T-cell (primary cell): ENCODE measurements at regions of chr15 and their contacts with region 1.

Region 1: DNA sequence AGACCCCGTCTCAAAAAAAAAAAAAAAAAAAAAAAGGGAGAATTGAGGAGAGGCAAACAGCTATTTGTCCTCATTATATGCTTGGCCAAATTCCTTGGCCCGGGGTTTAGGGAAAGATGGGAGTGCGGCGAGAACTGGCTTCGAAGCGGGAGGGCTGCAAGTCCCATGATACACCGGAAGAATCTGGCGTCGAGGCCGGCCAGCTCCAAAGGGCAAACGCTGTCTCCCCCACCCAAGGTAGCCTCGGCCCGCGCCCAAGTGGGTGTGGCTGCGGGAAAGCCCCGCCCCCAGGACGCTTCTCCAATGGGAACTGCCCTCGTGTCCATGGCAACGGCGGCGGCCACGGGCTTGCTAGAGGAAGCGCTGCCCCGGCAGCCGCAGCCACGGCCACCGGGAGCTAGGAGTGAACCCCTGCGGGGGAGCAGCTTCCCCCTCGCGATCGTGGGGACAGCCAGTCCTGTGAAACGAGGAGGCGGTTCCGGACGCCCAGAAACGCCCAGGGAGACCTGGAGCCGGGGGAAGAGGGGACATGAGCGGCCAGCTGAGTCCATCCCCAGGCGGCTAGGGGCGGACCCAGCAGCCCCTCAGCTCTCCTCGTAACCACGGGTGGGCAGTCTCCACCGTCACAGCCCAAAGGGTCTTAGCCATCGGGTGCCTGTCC is at the start of gene TTLL13:
- DNase-seq: peak in 30 of 35 experiments; percentile 9 to 71 (median 53)
- ATAC-seq: peak; percentile 65 to 86 (median 82)
- H3K4me3 ChIP-seq: peak within 1 kb of the TSS; percentile 56 to 62
- H3K4me3 Mint-ChIP-seq: peak within 1 kb of the TSS; percentile 68 to 82 (median 68)
- H3K27ac ChIP-seq: no peak within 1 kb of the TSS
- H3K27ac Mint-ChIP-seq: peak within 1 kb of the TSS; percentile 5 to 44
- H3K4me1 ChIP-seq: peaks cover 0 to 16% of the 10 kb centered on the region in 2 experiments
- H3K4me1 Mint-ChIP-seq: peaks cover 16 to 20% (median 19%) of the 10 kb centered on the region in 3 donors
- H3K27me3 ChIP-seq: peaks cover 0 to 2% of the 10 kb centered on the region in 2 experiments
- H3K27me3 Mint-ChIP-seq: no peaks in the 10 kb centered on the region
- total RNA-seq, gene TTLL13: 0.46 to 1.7 (median 0.70) TPM

Region 2: DNA sequence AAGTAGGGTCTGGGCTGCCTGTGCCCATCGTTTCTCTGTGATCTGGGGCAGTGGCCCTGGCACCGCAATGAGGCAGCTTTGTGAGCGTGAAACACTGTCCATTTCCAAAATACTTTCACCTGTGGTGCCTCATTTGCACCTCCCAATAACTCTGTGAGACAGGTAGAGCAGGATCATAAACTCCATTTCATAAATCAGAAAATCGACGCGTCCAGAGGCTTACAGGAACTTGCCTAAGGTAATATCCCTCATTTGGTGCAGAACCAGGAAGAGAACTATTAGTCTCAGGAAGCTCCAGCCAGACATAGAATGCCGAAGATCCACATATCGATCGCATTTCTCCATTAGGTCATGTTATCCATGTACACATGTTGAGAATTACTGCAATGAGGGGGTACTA is 86.4 kb before region 1 on chr15:
- CTCF ChIA-PET with region 1: no interaction called
- POLR2A ChIA-PET with region 1: interaction called in 1 of 2 experiments, 15 read pairs
- DNase-seq: no peak
- ATAC-seq: no peak
- H3K4me3 ChIP-seq: no peak overlapping the region
- H3K4me3 Mint-ChIP-seq: no peak overlapping the region
- H3K27ac ChIP-seq: no peak overlapping the region
- H3K27ac Mint-ChIP-seq: no peak overlapping the region
- H3K4me1 ChIP-seq: peaks cover under 1 to 4% of the 10 kb centered on the region in 2 experiments
- H3K4me1 Mint-ChIP-seq: peaks cover 5 to 13% (median 10%) of the 10 kb centered on the region in 3 donors
- H3K27me3 ChIP-seq: peaks cover 0 to 11% of the 10 kb centered on the region in 2 experiments
- H3K27me3 Mint-ChIP-seq: peaks cover 4 to 6% of the 10 kb centered on the region in 2 donors

Region 3: DNA sequence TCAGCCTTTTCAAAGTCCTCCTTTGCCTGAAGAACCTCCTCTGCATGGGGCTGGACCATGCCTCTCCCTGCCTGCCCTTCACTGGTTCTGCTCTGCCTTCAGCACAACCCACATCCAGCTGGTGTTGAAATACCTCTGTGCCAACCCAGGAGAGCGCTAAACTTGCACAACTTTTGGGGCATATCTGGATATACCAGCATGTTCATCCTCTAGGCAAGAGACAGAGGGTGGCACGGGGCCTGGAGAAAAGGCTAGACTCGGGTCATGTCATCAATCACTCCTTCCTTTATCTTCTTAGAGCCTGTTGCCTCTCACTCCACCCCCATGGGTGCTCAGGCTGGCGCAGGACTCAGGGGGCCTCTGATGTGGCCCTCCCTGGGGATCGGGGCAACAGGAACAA is 43.4 kb before region 1 on chr15:
- CTCF ChIA-PET with region 1: no interaction called
- POLR2A ChIA-PET with region 1: no interaction called
- DNase-seq: no peak
- ATAC-seq: no peak
- H3K4me3 ChIP-seq: no peak overlapping the region
- H3K4me3 Mint-ChIP-seq: no peak overlapping the region
- H3K27ac ChIP-seq: no peak overlapping the region
- H3K27ac Mint-ChIP-seq: no peak overlapping the region
- H3K4me1 ChIP-seq: peaks cover 13 to 29% of the 10 kb centered on the region in 2 experiments
- H3K4me1 Mint-ChIP-seq: peaks cover 28 to 37% (median 37%) of the 10 kb centered on the region in 3 donors
- H3K27me3 ChIP-seq: peaks cover 0 to 4% of the 10 kb centered on the region in 2 experiments
- H3K27me3 Mint-ChIP-seq: no peaks in the 10 kb centered on the region

Region 4: GRCh38 chr15:90265271-90266060 is 16.1 kb after region 1 on chr15 and contains the start of gene NGRN:
- CTCF ChIA-PET with region 1: no interaction called
- POLR2A ChIA-PET with region 1: interaction called, 5 to 16 read pairs
- DNase-seq: peak; percentile 84 to 96 (median 91)
- ATAC-seq: peak; percentile 88 to 91 (median 90)
- H3K4me3 ChIP-seq: peak within 1 kb of the TSS; percentile 89
- H3K4me3 Mint-ChIP-seq: peak within 1 kb of the TSS; percentile 95 to 97 (median 95)
- H3K27ac ChIP-seq: peak within 1 kb of the TSS; percentile 96
- H3K27ac Mint-ChIP-seq: peak within 1 kb of the TSS; percentile 98 to 99
- H3K4me1 ChIP-seq: peaks cover 26 to 44% of the 10 kb centered on the region in 2 experiments
- H3K4me1 Mint-ChIP-seq: peaks cover 48 to 54% (median 52%) of the 10 kb centered on the region in 3 donors
- H3K27me3 ChIP-seq: no peaks in the 10 kb centered on the region
- H3K27me3 Mint-ChIP-seq: no peaks in the 10 kb centered on the region
- total RNA-seq, gene NGRN: 44.5 to 53.1 (median 46.1) TPM

Region 5: DNA sequence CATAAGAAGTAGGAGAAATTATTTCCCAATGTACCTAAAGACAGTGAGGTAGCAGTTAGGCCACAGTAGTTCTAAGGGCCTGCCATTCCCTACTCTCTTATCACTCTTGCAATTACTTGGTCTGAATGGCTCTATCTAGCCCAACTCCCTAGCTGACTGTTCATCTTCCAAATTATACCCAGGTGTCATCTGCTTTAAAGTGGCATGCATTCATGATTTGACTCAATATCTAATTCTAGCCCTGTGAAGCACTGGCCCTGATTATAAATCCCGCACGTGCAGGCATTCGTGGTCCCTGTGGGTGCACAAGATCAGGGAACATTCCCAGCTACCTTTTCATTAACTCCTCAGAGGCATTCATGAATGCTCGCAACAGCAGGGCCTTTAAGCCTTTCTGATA is 59.7 kb after region 1 on chr15:
- CTCF ChIA-PET with region 1: no interaction called
- POLR2A ChIA-PET with region 1: no interaction called
- DNase-seq: no peak
- ATAC-seq: no peak
- H3K4me3 ChIP-seq: no peak overlapping the region
- H3K4me3 Mint-ChIP-seq: no peak overlapping the region
- H3K27ac ChIP-seq: no peak overlapping the region
- H3K27ac Mint-ChIP-seq: no peak overlapping the region
- H3K4me1 ChIP-seq: peaks cover 12 to 14% of the 10 kb centered on the region in 2 experiments
- H3K4me1 Mint-ChIP-seq: peaks cover 13 to 20% (median 17%) of the 10 kb centered on the region in 3 donors
- H3K27me3 ChIP-seq: no peaks in the 10 kb centered on the region
- H3K27me3 Mint-ChIP-seq: no peaks in the 10 kb centered on the region